ENCODE measurements at regions of chr6 and their contacts with region 1.

Region 1: DNA sequence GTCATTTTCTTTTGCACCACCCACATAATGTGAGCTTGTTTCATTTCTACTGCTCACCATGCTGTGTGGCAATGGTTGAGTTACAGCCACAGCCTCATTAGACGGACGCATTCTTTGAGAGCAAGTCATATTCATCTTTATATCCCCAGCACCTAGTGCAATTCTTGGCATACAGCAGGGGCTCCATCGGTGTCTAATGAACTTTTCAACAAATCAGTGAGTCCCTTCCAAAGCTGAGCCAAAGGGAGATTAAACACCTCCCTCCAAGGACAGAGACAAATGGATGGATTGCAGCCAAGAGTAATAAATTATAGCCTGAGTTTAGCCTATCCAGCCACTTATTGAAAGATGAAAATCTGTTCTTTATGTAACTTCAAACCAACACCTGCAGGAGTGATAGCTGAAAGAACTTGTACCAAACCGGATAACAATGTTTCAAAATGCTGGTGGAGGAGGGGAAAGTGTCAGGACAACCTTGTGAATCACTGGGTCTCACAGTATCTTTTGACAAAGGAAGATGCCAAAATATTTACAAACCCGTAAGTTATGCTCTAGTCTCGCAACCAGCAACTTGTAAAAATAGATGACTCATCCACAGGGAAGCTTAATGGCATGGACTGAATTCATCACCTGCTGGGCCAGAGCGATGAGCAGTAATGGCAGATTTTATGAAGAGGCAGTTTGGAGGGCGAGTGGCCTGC is 139.0 kb downstream of the PXDC1 start:
- DNase-seq: peak; percentile 98
- ATAC-seq: peak; percentile 85
- H3K4me3 ChIP-seq: peak overlapping the region; percentile 15; the same call in 1 of the 2 replicates
- H3K27ac ChIP-seq: peak overlapping the region; percentile 63
- H3K4me1 ChIP-seq: peaks cover 38% of the 10 kb centered on the region
- H3K27me3 ChIP-seq: no peaks in the 10 kb centered on the region
- CTCF ChIP-seq: no peak

Region 2: GRCh38 chr6:3500262-3501016 is 112.1 kb before region 1 on chr6:
- CTCF ChIA-PET with region 1: no interaction called
- POLR2A ChIA-PET with region 1: no interaction called
- intact Hi-C with region 1: loop called (anchors 2 kb)
- DNase-seq: peak; percentile 88
- ATAC-seq: peak; percentile 92
- H3K4me3 ChIP-seq: peak overlapping the region; percentile 16; the same call in 1 of the 2 replicates
- H3K27ac ChIP-seq: peak overlapping the region; percentile 14; the same call in 1 of the 2 replicates
- H3K4me1 ChIP-seq: peaks cover 22% of the 10 kb centered on the region
- H3K27me3 ChIP-seq: 0 out of 2 replicates have a peak, but pooled peaks cover 5% of the 10 kb centered on the region
- CTCF ChIP-seq: no peak

Region 3: DNA sequence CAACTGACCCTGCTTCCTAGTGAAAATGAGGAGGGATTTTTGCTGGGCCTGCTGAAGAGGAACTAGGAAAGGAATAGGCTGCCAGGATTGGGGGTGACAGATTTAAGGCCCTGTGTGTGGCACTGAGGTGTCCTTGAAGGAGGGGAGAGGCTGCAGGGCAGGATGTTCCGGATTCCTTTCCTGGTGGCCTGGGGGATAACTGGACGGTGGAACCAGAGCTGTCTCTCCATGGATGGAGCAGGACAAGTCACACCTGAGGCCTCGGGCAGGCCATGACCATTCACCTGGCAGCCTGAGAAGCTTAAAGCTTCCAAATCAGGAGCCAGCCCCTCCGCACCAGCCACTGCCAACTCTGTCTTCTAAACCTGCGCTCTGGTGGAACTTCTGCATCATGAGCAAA is 99.7 kb before region 1 on chr6:
- CTCF ChIA-PET with region 1: no interaction called
- POLR2A ChIA-PET with region 1: no interaction called
- intact Hi-C with region 1: no loop called
- DNase-seq: no peak
- ATAC-seq: no peak
- H3K4me3 ChIP-seq: no peak overlapping the region
- H3K27ac ChIP-seq: no peak overlapping the region
- H3K4me1 ChIP-seq: peaks cover 18% of the 10 kb centered on the region
- H3K27me3 ChIP-seq: no peaks in the 10 kb centered on the region
- CTCF ChIP-seq: no peak

Region 4: DNA sequence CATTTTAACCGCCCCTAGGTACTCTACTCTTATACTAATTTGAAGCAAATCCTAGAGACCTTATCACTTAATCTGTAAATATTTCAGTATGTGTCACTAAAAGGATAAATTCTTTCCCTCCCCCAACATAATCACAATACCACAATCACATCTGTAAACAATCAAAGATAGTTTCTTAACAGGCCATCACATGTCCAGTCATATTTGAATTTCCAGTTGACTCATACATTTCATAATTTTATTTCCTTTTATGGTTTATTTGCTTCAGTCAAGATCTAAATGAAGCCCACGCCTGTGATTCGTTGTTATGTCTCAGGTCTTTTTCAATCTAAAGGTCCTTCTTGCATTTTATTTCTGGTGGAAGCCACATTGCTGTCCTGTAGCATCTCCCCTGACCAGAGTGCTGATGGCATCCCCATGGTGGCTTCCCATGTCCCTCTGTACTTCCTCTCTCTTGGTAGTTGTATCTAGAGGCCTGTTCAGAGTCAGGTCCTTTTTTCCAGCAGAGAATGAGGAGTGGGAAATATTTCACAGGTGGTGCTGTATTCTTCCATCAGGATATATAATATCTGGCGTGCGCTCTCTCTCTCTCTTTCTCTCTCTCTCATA is 27.1 kb before region 1 on chr6:
- CTCF ChIA-PET with region 1: no interaction called
- POLR2A ChIA-PET with region 1: no interaction called
- intact Hi-C with region 1: loop called (anchors 1 kb)
- DNase-seq: peak; percentile 94
- ATAC-seq: peak; percentile 88
- H3K4me3 ChIP-seq: no peak overlapping the region
- H3K27ac ChIP-seq: peak overlapping the region; percentile 37
- H3K4me1 ChIP-seq: peaks cover 16% of the 10 kb centered on the region
- H3K27me3 ChIP-seq: no peaks in the 10 kb centered on the region
- CTCF ChIP-seq: no peak

Region 5: GRCh38 chr6:3664625-3665041 is 52.1 kb after region 1 on chr6:
- CTCF ChIA-PET with region 1: no interaction called
- POLR2A ChIA-PET with region 1: no interaction called
- intact Hi-C with region 1: no loop called
- DNase-seq: peak; percentile 24
- ATAC-seq: peak; percentile 66
- H3K4me3 ChIP-seq: no peak overlapping the region
- H3K27ac ChIP-seq: no peak overlapping the region
- H3K4me1 ChIP-seq: peaks cover 9% of the 10 kb centered on the region; the same call in 1 of the 2 replicates
- H3K27me3 ChIP-seq: no peaks in the 10 kb centered on the region
- CTCF ChIP-seq: no peak

Region 6: GRCh38 chr6:3732345-3733141 is 120.1 kb after region 1 on chr6:
- CTCF ChIA-PET with region 1: no interaction called
- POLR2A ChIA-PET with region 1: no interaction called
- intact Hi-C with region 1: loop called (anchors 5 kb)
- DNase-seq: peak; percentile 86
- ATAC-seq: peak; percentile 96
- H3K4me3 ChIP-seq: peak overlapping the region; percentile 20; the same call in 1 of the 2 replicates
- H3K27ac ChIP-seq: peak overlapping the region; percentile 30
- H3K4me1 ChIP-seq: peaks cover 12% of the 10 kb centered on the region
- H3K27me3 ChIP-seq: no peaks in the 10 kb centered on the region
- CTCF ChIP-seq: peak; percentile 96

Measured in PC-3 (cell line).